Common myeloid progenitor, CD34-positive (primary cell): ENCODE measurements at regions of chr11 and their contacts with region 1.

Region 1: GRCh38 chr11:114180301-114181055 is 115.7 kb upstream of the NNMT start:
- DNase-seq: peak; percentile 50 to 71 (median 67)
- H3K4me3 ChIP-seq: no peak overlapping the region
- H3K27ac ChIP-seq: no peak overlapping the region
- H3K4me1 ChIP-seq: peaks cover 13 to 36% (median 21%) of the 10 kb centered on the region in 4 experiments
- H3K27me3 ChIP-seq: no peaks in the 10 kb centered on the region

Region 2: DNA sequence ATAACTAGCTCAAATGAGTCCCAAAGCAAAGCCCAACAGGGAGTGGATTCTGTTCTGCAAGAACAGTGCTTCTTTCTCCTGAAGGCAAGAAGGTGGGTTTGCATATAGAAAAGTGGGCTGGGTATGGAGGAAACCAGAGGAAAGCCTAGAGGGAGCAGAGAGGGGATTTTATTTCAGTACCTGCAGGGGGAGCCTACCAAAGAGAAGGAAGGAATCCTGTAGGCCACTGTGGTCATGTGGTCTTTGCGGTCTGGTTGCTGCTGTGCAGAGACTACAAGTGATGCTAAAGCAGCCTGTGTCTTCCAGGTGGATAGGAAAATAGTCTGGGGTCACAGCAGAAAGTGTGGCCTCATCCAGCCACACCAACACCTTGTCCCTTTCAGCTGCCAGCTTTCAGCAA is 154.1 kb before region 1 on chr11:
- CTCF ChIA-PET with region 1: interaction called, 19 read pairs
- POLR2A ChIA-PET with region 1: no interaction called
- DNase-seq: peak; percentile 76 to 87 (median 87)
- H3K4me3 ChIP-seq: no peak overlapping the region
- H3K27ac ChIP-seq: no peak overlapping the region
- H3K4me1 ChIP-seq: no peaks in the 10 kb centered on the region
- H3K27me3 ChIP-seq: peaks cover 0 to 10% (median 0%) of the 10 kb centered on the region in 5 experiments

Region 3: DNA sequence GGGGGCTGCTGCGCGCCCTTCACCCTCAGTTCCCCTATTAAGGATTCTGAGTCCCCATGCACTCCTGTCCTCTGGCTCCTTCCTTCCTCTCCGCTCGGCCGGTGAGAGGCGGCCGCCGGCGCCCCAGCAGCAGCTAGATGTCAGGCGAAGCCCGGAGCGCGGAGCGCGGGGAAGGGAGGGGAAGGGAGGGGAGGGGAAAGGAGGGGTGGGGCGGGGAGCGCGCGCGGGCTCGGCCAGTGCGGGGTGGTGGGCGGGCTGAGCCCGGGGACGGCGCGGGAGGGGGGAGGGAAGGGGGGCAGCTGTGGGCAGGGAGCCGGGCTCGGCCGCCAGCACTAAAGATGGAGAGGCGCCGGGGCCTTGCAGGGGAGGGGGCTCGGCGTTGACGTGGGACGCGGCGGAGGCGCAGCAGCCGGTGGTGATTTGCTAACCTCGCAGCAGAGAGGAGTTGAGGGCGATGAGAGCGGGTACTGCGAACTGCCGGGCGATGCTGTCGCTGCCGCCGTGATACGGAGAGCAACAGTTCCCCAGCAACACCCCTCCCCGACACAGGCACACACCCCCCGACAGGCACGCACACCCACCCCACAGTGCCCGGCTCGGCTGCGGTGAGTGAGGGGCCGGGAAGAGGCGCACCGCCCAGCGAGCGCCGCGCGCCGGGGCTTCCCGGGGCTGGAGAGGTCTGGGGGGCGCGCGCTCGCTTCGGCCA is 121.0 kb before region 1 on chr11 and contains the start of gene ZBTB16:
- CTCF ChIA-PET with region 1: interaction called, 41 read pairs
- POLR2A ChIA-PET with region 1: interaction called, 9 read pairs
- DNase-seq: peak; percentile 89 to 95 (median 91)
- H3K4me3 ChIP-seq: peak within 1 kb of the TSS; percentile 72 to 95 (median 90)
- H3K27ac ChIP-seq: peak within 1 kb of the TSS; percentile 61 to 78
- H3K4me1 ChIP-seq: peaks cover 2 to 50% (median 41%) of the 10 kb centered on the region in 4 experiments
- H3K27me3 ChIP-seq: peaks cover 0 to 19% (median 2%) of the 10 kb centered on the region in 5 experiments

Region 4: DNA sequence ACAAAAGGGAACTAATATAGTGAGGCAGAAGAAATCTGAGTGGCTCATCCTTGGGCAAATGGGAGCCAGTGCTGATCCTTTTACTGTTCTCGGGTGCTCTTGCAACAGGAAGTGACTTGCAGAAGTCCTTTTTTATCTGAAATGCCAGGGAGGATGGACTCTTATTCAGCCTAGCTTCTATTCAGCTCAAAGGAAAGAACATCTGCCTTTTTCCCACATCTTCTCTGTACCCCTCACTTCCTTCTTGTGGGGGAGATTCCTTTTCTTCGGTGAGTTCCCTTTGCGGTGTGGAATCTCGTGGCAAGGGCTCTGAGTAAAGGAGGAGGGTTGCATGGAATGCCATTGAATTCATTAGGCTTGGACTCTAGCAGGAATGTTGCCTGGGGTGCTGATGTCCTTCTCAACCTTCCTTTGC is 44.7 kb before region 1 on chr11:
- CTCF ChIA-PET with region 1: interaction called, 34 read pairs
- POLR2A ChIA-PET with region 1: interaction called, 3 read pairs
- DNase-seq: peak; percentile 84 to 95 (median 92)
- H3K4me3 ChIP-seq: peak overlapping the region in 4 of 7 experiments; percentile 9 to 42 (median 27)
- H3K27ac ChIP-seq: peak overlapping the region; percentile 81 to 91
- H3K4me1 ChIP-seq: peaks cover 28 to 86% (median 56%) of the 10 kb centered on the region in 4 experiments
- H3K27me3 ChIP-seq: no peaks in the 10 kb centered on the region

Region 5: DNA sequence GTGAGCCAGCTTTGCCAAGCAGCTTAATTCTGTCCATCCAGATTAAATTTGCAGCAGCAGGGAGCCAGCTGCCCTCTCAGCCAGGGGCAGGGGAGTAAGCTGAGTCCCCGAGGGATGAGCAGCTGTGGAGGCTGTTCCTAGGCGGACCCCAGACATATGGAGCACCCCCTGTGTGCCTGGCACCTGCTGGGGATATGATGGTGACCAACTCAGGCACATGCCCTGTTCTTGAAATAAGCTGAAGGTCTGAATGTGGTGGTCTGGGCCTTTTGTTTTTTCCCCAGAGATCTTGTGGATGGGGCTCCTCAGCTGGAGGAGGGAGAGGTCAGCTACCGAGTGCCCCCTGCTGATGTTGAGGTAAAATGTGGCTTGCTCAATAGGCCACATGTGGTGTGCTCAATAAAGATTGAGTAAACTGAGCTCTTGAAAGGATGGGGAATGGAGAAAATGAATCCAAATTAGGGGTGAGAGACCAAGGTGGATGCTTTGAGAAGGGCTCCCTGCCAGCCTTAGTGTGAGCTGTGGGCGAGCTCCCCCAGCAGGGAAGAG is 12.4 kb after region 1 on chr11:
- CTCF ChIA-PET with region 1: interaction called, 70 read pairs
- POLR2A ChIA-PET with region 1: interaction called, 6 read pairs
- DNase-seq: no peak
- H3K4me3 ChIP-seq: no peak overlapping the region
- H3K27ac ChIP-seq: no peak overlapping the region
- H3K4me1 ChIP-seq: peaks cover 2 to 20% (median 7%) of the 10 kb centered on the region in 4 experiments
- H3K27me3 ChIP-seq: no peaks in the 10 kb centered on the region

Region 6: DNA sequence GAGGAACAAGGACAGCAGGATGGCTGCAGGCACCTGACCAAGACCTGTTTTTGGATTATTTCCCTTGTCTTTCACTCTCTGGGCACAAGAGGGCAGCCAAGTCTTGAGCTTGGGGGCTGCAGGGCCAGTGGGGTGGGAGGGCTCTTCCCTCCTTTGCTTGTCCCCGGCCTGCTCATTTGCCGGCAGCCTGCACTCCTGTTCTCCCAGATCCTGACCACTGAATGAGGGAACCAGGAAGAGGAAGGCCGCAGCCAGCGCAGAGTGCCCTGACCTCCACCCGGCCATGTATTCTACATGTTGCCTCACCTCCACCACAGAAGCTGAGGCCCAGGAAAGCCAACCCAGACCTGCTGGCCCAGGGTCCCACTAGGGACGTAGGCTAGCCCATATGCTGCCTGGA is 100.2 kb after region 1 on chr11:
- CTCF ChIA-PET with region 1: no interaction called
- POLR2A ChIA-PET with region 1: no interaction called
- DNase-seq: peak; percentile 44 to 66 (median 62)
- H3K4me3 ChIP-seq: no peak overlapping the region
- H3K27ac ChIP-seq: no peak overlapping the region
- H3K4me1 ChIP-seq: peaks cover 0 to 2% (median 0%) of the 10 kb centered on the region in 4 experiments
- H3K27me3 ChIP-seq: peaks cover 0 to 24% (median 12%) of the 10 kb centered on the region in 5 experiments